Brain microvascular endothelial cell (primary cell): ENCODE measurements at regions of chr3 and their contacts with region 1.

Region 1: DNA sequence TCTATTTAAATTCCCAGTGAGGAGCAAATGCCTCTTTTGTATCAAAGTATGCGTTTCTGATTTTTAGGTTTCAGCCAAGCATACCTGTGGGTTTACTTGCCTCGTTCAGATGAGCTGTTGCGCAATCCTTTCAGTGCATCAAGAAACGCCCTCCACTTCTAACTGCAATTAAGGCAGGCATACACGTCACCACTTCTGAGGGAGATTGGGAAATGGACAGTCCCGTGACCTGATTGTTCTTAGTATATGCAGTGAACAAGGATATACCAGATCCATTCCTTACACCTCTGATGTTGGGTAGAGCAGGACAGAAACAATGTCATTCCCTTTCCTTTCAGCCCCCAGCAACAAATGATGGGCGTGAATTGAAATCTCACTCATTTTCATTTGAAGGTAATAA is 219.0 kb downstream of the ITPR1 start:
- DNase-seq: no peak
- H3K4me3 ChIP-seq: no peak overlapping the region
- H3K27ac ChIP-seq: no peak overlapping the region
- H3K27me3 ChIP-seq: no peaks in the 10 kb centered on the region
- CTCF ChIP-seq: no peak

Region 2: DNA sequence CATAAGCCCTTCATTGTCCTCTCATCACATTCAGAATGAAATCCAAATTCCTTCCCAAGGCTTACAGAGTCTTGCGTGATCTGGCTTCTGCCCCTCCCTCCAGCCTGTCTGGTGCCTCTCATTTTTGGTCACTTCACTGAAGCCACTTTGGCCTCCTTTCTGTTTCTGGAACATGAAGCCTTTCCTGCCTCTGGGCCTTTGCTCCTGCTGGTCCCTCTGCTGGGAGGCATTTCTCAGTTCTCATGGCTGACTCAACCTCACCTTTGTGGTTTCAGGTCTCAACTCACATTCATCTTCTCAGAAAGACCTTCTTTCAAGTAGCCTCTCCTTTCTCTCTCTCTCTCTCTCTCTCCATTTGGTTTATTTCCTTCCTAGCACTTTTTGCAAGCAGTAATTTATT is 223.2 kb after region 1 on chr3:
- in situ Hi-C with region 1: no loop called
- DNase-seq: no peak
- H3K4me3 ChIP-seq: no peak overlapping the region
- H3K27ac ChIP-seq: no peak overlapping the region
- H3K27me3 ChIP-seq: no peaks in the 10 kb centered on the region
- CTCF ChIP-seq: no peak

Region 3: DNA sequence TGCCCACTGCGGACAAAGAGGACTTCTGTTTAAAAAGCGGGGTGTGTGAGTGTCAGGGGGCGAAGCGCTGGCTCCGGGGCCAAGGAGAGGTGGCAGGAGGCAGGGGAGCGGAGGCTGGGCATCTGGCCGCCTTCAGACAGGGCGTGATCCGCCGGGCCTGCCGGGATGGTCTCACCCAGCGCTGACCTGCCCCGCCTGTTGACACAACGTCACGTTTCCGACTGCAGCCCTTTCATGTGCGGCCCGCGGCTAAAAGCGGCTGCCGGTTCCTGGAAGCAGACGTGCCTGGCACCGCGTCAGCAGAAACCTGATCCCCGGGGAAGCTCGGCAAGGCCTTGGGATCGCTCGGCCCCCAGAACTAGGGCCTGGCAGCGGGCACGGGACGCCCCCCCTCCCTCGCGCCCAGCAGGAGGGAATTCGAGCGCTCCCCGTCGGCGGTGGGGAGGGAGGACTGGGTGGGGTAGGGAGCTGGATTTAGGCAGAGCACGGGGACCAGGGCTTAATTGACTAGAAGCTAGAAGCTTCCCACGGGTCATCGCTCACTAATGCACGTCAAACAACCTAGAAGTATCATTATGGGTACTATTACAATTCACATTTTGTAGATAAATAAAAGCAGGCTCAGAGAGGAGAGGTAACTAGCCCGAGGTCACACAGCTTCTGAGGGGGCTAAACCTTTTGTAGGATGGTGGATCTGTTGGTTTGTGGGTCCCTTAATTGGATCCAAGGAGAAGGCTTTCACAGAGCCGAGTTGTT is 274.8 kb after region 1 on chr3:
- in situ Hi-C with region 1: loop called (anchors 10 kb)
- DNase-seq: peak; percentile 98
- H3K4me3 ChIP-seq: peak overlapping the region; percentile 31
- H3K27ac ChIP-seq: peak overlapping the region; percentile 90
- H3K27me3 ChIP-seq: no peaks in the 10 kb centered on the region
- CTCF ChIP-seq: peak; percentile 24